ENCODE measurements at regions of chr2 and their contacts with region 1.

Region 1: GRCh38 chr2:197804049-197804757 is at the start of gene PLCL1:
- DNase-seq: peak; percentile 96
- H3K4me3 ChIP-seq: peak within 1 kb of the TSS; percentile 81
- H3K27ac ChIP-seq: no peak within 1 kb of the TSS
- H3K4me1 ChIP-seq: no peaks in the 10 kb centered on the region; the same call in 1 of the 2 replicates
- H3K27me3 ChIP-seq: no peaks in the 10 kb centered on the region
- total RNA-seq, gene PLCL1: 2.3 TPM in 2 replicates

Region 2: GRCh38 chr2:197515739-197516392 is 288.3 kb before region 1 on chr2 and contains the start of gene MOB4:
- in situ Hi-C with region 1: no loop called
- DNase-seq: peak; percentile 97
- H3K4me3 ChIP-seq: peak within 1 kb of the TSS; percentile 100
- H3K27ac ChIP-seq: peak within 1 kb of the TSS; percentile 70
- H3K4me1 ChIP-seq: peaks cover 23% of the 10 kb centered on the region
- H3K27me3 ChIP-seq: no peaks in the 10 kb centered on the region
- total RNA-seq, gene MOB4: 32.2 and 45.8 TPM in 2 replicates

Region 3: DNA sequence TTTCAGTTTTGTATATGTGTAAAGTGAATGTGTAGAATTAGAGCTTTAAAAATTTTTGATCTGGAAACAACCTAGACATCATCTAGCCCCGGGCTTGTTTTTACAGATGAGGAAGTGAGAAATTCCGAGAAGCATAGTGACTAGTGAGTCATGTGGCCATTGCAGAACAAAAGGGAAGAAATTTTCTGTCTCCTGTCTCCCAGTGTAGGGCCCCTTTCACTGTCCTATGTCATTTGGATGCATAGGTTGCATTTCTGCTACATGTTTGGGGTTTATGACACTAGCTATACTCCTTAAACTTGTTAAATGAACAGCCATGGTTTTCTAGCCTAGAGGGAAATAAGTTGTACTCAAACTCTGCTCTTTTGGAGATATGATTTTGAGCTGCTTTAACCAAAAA is 84.8 kb after region 1 on chr2:
- in situ Hi-C with region 1: no loop called
- DNase-seq: peak; percentile 90
- H3K4me3 ChIP-seq: 0 out of 2 replicates have a peak overlapping the region, but pooled peaks have one; percentile 20
- H3K27ac ChIP-seq: peak overlapping the region; percentile 47; the same call in 1 of the 2 replicates
- H3K4me1 ChIP-seq: peaks cover 18% of the 10 kb centered on the region
- H3K27me3 ChIP-seq: no peaks in the 10 kb centered on the region

Region 4: DNA sequence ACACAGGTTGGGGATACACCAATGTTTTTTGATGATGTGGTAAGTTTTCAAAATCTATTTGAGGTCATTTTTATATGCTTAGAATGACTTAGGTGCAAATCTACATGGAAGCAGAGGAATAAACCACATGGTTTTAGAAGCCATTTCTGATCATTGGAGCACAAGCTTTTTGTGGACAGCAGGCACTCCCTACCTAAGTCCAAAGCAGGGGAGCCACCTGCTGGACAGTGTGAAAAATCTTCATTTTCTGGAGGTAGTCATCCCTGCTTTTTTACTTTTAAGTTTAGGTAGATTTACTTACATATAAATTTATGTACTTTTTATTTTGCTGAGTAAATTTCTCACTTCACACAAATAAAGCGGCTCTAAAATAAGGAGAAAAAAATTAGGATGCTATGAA is 323.4 kb after region 1 on chr2:
- in situ Hi-C with region 1: loop called (anchors 5 kb)
- DNase-seq: peak; percentile 84
- H3K4me3 ChIP-seq: no peak overlapping the region
- H3K27ac ChIP-seq: no peak overlapping the region
- H3K4me1 ChIP-seq: no peaks in the 10 kb centered on the region
- H3K27me3 ChIP-seq: no peaks in the 10 kb centered on the region

Region 5: DNA sequence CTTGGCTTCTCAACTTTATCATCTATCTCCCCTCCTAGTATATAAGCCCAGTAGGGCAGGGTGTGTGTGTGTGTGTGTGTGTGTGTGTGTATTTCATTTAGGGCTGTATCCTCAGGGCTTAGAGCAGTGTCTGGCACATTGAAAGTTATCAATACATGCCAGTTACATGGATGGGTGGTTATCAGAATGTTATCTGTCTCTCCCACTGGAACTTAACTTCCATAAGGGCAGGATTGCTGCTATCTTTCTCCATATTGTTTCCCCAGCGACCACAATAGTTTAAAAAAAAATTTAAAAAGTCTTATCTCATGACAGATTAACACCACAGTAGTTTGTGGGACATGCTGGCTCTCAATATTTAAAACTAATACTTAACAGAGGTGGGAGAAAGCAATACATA is 489.1 kb after region 1 on chr2:
- in situ Hi-C with region 1: loop called (anchors 5 kb)
- DNase-seq: no peak
- H3K4me3 ChIP-seq: no peak overlapping the region
- H3K27ac ChIP-seq: no peak overlapping the region
- H3K4me1 ChIP-seq: no peaks in the 10 kb centered on the region
- H3K27me3 ChIP-seq: no peaks in the 10 kb centered on the region

Region 6: DNA sequence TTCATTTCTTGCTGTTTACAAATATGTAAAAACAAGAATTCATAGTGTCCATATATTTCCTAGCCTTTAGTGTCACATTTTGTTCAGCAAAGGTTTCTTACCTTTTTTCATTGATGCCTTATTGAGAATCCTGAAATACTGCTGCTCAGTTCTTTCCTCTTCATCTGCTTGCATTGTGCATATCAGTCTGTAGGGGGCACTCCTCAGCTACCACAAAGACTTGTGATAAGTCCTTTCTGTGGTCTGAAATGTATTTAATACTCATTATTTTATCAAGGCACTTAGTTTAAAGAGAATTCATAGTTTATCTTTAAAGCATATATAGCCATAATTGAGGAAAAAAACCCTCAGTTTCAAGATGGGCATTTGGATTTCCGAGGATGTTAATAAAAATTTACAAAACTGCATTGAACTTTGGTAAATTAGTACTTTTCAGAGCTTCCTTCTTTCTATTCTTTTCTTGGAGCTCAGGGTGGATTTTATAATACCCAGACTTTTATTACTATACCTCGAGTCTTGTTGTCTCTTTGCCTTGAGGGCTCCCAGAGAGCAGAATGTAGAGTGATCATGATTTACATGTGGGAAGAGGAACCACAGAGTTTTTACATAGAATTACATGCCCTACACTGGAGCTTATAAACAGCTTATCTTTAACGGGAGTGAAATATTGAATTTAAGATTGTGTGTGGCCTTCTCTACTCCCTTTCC is 570.3 kb after region 1 on chr2:
- in situ Hi-C with region 1: no loop called
- DNase-seq: peak; percentile 80
- H3K4me3 ChIP-seq: no peak overlapping the region
- H3K27ac ChIP-seq: no peak overlapping the region
- H3K4me1 ChIP-seq: peaks cover 8% of the 10 kb centered on the region; the same call in 1 of the 2 replicates
- H3K27me3 ChIP-seq: no peaks in the 10 kb centered on the region